ENCODE measurements at regions of chr1 and their contacts with region 1.

Region 1: GRCh38 chr1:54188291-54188690 is 11.5 kb downstream of the CYB5RL start:
- DNase-seq: no peak
- H3K4me3 ChIP-seq: no peak overlapping the region
- H3K27ac ChIP-seq: no peak overlapping the region
- H3K4me1 ChIP-seq: no peaks in the 10 kb centered on the region
- H3K27me3 ChIP-seq: no peaks in the 10 kb centered on the region
- CTCF ChIP-seq: no peak

Region 2: DNA sequence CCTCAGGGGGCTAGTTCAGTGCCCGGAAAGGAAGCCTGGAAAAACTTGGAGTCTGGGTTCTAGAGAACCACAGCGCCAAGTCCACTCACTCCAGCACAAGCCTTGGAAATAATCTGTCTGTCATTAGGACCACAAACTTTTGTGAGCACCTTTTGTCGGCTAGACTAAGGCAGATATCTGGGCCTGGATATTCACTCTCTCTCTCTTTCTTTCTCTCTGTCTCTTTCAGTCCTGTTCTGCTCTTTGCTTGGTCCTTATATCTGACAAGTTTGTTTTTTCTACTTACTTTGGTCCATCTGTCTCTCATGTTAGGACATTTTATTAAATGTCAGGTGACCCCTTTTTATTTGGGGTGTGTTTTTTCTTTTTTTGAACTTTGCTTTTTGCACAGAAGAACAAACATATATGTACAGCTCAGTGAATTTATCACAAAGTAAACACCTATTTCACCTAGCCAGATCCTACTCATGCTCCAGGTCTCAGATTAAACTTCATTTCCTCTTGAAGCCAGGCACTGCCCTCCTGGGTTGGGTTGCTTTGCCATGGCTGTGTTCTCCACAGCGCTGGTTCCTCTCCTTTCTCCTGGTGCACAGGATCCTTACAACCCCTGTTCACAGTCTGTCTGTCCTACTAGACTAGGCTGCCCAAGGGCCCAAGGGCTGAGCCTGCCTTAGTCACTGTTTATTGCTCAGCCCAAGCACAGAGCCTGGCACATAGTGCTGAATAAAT is 94.1 kb before region 1 on chr1:
- CTCF ChIA-PET with region 1: no interaction called
- dilution Hi-C with region 1: loop called (anchors 5 kb)
- in situ Hi-C with region 1: no loop called
- intact Hi-C with region 1: no loop called
- DNase-seq: no peak
- H3K4me3 ChIP-seq: no peak overlapping the region
- H3K27ac ChIP-seq: no peak overlapping the region
- H3K4me1 ChIP-seq: no peaks in the 10 kb centered on the region
- H3K27me3 ChIP-seq: no peaks in the 10 kb centered on the region
- CTCF ChIP-seq: no peak

Region 3: DNA sequence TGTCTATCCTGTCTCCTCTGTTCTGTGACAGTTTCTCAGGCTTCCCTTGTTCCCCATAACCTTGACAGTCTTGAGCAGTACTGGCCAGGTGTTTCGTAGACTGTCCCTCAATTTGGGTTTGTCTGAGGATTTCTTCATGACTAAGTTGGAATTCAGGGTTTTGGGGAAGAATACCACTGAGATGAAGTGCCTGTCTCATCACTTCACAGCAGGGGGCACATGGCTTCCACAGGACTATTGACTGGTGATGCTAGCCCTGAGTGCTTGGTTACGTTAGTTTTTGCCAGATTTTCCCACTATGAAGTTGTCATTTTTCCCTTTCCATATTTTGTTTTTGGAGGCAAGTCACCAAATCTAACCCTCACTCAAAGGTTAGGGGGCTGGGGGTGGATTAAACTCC is 81.2 kb before region 1 on chr1:
- CTCF ChIA-PET with region 1: no interaction called
- dilution Hi-C with region 1: no loop called
- in situ Hi-C with region 1: no loop called
- intact Hi-C with region 1: no loop called
- DNase-seq: no peak
- H3K4me3 ChIP-seq: no peak overlapping the region
- H3K27ac ChIP-seq: no peak overlapping the region
- H3K4me1 ChIP-seq: no peaks in the 10 kb centered on the region
- H3K27me3 ChIP-seq: no peaks in the 10 kb centered on the region
- CTCF ChIP-seq: peak; percentile 9 to 37

Region 4: DNA sequence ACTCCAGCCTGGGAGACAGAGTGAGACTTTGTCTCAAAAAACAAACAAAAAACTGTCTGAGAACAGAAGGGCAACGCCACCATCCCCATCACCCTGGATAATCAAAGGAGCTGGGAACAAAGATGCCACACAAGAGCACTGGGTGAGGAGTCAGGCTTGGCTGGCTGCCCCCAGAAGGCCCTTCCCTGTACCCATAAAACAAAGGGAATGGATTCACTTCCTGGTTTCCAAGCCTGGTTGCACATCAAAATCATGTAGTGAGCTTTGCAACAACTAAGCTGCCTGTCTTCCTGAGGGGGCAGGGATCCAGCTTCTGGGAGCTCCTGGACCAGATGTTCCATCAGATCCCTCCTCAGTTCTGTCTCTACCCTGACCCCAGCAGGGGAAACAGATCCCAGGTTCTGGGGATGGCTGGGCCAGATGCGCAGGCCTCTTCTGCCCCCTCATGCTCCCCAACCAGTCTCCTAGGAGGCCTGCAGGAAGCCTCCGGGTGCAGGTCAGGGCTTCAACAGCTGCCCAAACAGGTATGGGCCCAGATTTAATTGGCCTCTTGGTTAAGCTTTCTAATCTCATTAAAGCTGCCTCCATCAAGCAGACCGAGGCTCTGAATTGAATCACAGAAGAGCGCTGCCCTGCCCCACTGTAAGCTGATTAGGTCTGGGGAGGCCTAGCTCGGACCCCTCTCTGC is 109.4 kb after region 1 on chr1:
- CTCF ChIA-PET with region 1: no interaction called
- dilution Hi-C with region 1: loop called (anchors 5 kb)
- in situ Hi-C with region 1: no loop called
- intact Hi-C with region 1: no loop called
- DNase-seq: no peak
- H3K4me3 ChIP-seq: no peak overlapping the region
- H3K27ac ChIP-seq: no peak overlapping the region
- H3K4me1 ChIP-seq: peaks cover 6% of the 10 kb centered on the region
- H3K27me3 ChIP-seq: no peaks in the 10 kb centered on the region
- CTCF ChIP-seq: no peak

Region 5: GRCh38 chr1:54421101-54421504 is 232.8 kb after region 1 on chr1:
- CTCF ChIA-PET with region 1: no interaction called
- dilution Hi-C with region 1: no loop called
- in situ Hi-C with region 1: no loop called
- intact Hi-C with region 1: no loop called
- DNase-seq: peak; percentile 80
- H3K4me3 ChIP-seq: no peak overlapping the region
- H3K27ac ChIP-seq: no peak overlapping the region
- H3K4me1 ChIP-seq: peaks cover 3% of the 10 kb centered on the region
- H3K27me3 ChIP-seq: no peaks in the 10 kb centered on the region
- CTCF ChIP-seq: no peak

Measured in mammary epithelial cell (primary cell).